ENCODE measurements at regions of chr16 and their contacts with region 1.

Region 1: DNA sequence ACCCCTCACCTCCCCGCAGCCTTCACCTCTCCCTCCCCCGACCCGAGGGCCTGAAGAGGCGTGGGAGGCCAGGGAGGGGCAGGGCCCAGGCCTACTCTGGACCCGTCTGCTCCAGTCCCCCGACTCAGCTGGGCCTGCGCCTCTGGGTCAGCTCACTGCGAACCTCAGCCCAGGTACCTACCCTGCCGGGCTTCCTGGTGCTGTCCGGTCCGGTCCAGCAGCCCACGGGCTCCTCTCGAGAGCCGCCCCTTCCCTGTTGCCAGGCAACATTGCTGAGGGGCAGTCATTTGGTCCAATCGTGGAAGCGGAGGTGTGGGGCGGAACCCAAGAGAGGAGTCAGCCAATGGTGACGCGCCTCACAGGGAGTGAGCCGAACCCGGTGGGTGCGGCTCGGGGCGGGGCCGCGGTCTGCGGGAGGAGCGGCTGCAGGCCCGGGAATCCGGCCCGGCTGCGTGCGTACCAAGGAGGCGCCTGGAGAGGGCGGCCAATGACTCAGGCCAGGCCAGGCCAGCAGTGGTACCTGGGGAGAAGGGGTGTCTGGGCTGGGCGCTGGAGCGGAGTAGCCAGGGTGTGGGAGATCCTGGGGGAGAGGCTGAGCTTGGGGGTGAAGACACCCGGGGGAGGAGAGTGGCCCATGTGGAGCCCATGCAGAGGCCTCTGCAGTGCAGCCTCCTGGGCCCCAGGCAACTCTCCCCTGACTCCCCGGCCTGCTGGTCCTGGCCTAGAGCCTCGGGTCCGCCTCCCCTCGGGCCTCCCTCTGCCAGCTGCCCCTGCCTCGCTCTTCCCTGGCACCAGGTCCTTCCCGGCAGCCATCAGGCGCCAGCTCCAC is at the start of gene MEAK7:
- DNase-seq: peak; percentile 95 to 98 (median 97)
- ATAC-seq: peak; percentile 94
- H3K4me3 ChIP-seq: peak within 1 kb of the TSS; percentile 74 to 83
- H3K4me3 Mint-ChIP-seq: peak within 1 kb of the TSS; percentile 90
- H3K27ac ChIP-seq: peak within 1 kb of the TSS; percentile 43
- H3K27ac Mint-ChIP-seq: peak within 1 kb of the TSS; percentile 84
- H3K4me1 ChIP-seq: peaks cover 56% of the 10 kb centered on the region
- H3K4me1 Mint-ChIP-seq: peaks cover 57% of the 10 kb centered on the region
- H3K27me3 ChIP-seq: peaks cover 0 to 2% of the 10 kb centered on the region in 2 experiments
- H3K27me3 Mint-ChIP-seq: no peaks in the 10 kb centered on the region
- CTCF ChIP-seq: no peak
- total RNA-seq, gene MEAK7: 2.1 to 2.2 TPM

Region 2: DNA sequence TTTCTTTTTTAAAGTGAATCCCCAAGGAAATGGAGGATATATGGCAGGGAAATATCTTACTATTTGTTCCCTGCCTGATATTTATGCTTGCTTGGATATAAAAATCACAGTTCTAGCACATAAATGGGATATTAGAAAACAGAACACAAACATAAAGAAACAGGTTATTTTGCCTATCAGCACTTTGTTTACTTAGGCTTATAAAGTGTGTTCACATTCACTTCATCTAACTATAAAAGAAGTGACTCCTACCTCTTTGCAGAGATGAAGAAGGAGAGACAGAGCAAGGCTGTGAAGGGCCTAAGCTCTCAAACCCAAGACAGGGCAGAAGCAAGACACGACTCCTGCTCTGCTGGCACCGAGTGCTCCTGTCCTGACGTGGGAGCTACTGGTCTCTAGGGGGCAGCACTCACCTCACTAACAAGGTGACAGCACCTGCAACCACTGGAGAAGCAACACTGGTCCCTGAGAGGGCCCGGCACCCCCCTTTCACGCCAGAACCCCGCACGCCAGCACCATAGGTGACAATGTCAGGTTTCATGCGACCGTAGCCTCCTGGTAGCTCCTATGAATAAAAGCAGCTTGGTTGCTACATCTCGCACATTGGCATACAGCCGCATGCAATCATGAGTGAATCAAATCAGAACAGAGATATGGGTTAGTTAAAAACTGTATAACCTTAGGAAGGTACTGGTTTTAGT is 419.9 kb before region 1 on chr16:
- CTCF ChIA-PET with region 1: no interaction called
- POLR2A ChIA-PET with region 1: no interaction called
- intact Hi-C with region 1: loop called in 1 of 2 experiments (anchors 5 kb)
- DNase-seq: peak; percentile 44 to 84 (median 71)
- ATAC-seq: peak; percentile 88
- H3K4me3 ChIP-seq: no peak overlapping the region
- H3K4me3 Mint-ChIP-seq: no peak overlapping the region
- H3K27ac ChIP-seq: no peak overlapping the region
- H3K27ac Mint-ChIP-seq: no peak overlapping the region
- H3K4me1 ChIP-seq: peaks cover 20% of the 10 kb centered on the region
- H3K4me1 Mint-ChIP-seq: peaks cover 32% of the 10 kb centered on the region
- H3K27me3 ChIP-seq: no peaks in the 10 kb centered on the region
- H3K27me3 Mint-ChIP-seq: no peaks in the 10 kb centered on the region
- CTCF ChIP-seq: peak; percentile 73

Region 3: DNA sequence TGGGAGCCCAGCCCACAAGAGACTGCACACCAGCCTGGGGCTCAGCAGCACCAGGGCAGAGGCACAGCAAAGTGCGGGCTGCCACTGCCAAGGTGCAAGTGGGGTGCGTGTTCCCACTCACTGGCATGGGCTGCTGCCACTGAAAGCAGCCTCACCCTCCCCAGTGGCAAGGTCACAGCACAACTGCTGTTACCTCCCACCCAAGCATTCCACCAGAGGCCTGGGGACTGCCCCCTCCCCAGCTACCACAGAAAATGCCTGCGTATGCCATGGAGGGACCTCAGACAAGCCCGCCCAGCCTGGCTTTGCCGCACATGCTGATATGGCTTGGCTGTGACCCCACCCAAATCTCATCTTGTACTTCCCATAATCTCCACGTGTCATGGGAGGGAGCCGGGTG is 33.3 kb before region 1 on chr16:
- CTCF ChIA-PET with region 1: no interaction called
- POLR2A ChIA-PET with region 1: no interaction called
- intact Hi-C with region 1: no loop called
- DNase-seq: peak in 1 of 9 experiments; percentile 15
- ATAC-seq: no peak
- H3K4me3 ChIP-seq: no peak overlapping the region
- H3K4me3 Mint-ChIP-seq: no peak overlapping the region
- H3K27ac ChIP-seq: no peak overlapping the region
- H3K27ac Mint-ChIP-seq: no peak overlapping the region
- H3K4me1 ChIP-seq: no peaks in the 10 kb centered on the region
- H3K4me1 Mint-ChIP-seq: peaks cover 2% of the 10 kb centered on the region
- H3K27me3 ChIP-seq: no peaks in the 10 kb centered on the region
- H3K27me3 Mint-ChIP-seq: no peaks in the 10 kb centered on the region
- CTCF ChIP-seq: no peak

Region 4: GRCh38 chr16:84484579-84485254 is 19.9 kb before region 1 on chr16:
- CTCF ChIA-PET with region 1: interaction called, 10 read pairs
- POLR2A ChIA-PET with region 1: no interaction called
- intact Hi-C with region 1: no loop called
- DNase-seq: peak in 1 of 9 experiments; percentile 51
- ATAC-seq: no peak
- H3K4me3 ChIP-seq: no peak overlapping the region
- H3K4me3 Mint-ChIP-seq: no peak overlapping the region
- H3K27ac ChIP-seq: no peak overlapping the region
- H3K27ac Mint-ChIP-seq: no peak overlapping the region
- H3K4me1 ChIP-seq: no peaks in the 10 kb centered on the region
- H3K4me1 Mint-ChIP-seq: no peaks in the 10 kb centered on the region
- H3K27me3 ChIP-seq: no peaks in the 10 kb centered on the region
- H3K27me3 Mint-ChIP-seq: no peaks in the 10 kb centered on the region
- CTCF ChIP-seq: no peak

Region 5: DNA sequence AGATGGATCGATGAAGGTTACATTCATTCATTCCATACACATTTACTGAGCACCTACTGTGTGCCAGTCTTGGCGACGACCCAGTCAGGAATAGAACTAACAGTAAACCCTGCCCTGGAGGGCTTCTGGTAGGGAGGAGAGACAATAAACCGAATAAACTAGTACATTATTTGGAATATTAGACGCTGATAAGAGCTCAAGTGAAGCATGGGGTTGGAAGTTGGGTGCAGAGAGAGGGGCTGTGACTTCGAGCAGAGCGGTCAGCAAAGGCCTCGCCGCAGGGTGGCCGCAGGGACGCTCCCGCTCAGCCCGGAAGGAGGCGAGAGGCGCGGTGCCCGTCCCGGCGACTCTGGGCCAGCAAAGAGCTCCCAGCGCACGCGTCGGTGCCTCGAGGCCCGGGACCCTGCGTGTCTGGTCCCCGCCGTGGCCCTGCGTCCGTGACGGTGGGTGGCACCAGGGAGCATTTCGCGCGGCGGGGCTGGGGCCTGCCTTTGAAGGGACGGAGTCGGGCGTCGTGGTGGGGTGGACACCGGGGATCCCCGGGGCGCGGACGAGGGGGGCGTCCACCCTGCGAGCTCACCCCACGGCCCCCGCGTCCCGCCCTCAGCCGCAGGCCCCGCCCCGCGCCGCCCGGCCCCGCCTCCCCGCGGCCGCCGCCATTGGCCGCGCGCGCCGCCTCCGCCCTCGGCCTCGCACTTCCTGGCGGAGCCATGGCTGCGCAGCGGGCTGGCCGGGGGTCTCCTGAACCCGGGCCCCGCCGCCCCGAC is 143.4 kb after region 1 on chr16 and contains the start of gene KLHL36:
- CTCF ChIA-PET with region 1: interaction called, 13 read pairs
- POLR2A ChIA-PET with region 1: no interaction called
- intact Hi-C with region 1: no loop called
- DNase-seq: peak; percentile 53 to 84 (median 71)
- ATAC-seq: peak; percentile 84
- H3K4me3 ChIP-seq: peak within 1 kb of the TSS; percentile 59 to 63
- H3K4me3 Mint-ChIP-seq: peak within 1 kb of the TSS; percentile 87
- H3K27ac ChIP-seq: peak within 1 kb of the TSS; percentile 44 to 68
- H3K27ac Mint-ChIP-seq: peak within 1 kb of the TSS; percentile 90
- H3K4me1 ChIP-seq: peaks cover 45% of the 10 kb centered on the region
- H3K4me1 Mint-ChIP-seq: peaks cover 44% of the 10 kb centered on the region
- H3K27me3 ChIP-seq: no peaks in the 10 kb centered on the region
- H3K27me3 Mint-ChIP-seq: no peaks in the 10 kb centered on the region
- CTCF ChIP-seq: no peak
- total RNA-seq, gene KLHL36: 50.8 to 56.5 TPM

Region 6: DNA sequence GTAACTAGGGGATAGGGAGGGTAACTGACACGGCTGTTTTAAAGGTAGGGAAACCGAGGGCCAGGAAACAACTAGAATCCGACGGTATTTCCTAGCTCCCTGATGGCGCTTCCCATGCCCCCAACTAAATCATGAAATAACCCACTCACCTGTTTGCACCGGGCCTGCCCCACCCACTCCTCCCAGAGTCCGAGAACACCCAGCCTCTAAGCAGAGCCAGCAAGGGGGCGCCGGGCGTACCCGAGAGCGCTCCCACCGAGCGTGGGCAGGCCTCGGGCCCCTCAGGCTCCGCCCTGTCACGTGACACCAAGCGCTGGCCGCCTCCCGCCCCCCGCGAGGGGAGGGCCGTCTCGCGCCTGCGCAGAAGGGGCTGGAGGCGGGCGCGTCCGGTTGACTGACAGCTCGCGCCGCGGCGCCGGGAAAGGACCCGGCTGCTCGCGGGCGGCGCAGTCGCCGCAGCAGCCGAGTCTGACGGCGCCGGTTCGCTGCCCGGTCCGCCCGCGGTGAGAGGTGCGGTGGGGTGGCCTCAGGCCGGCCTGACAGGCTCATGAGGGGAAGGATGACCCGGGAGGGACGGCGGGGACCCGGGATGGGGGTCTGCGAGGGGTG is 522.8 kb after region 1 on chr16 and contains the start of gene KIAA0513:
- CTCF ChIA-PET with region 1: no interaction called
- POLR2A ChIA-PET with region 1: no interaction called
- intact Hi-C with region 1: loop called in 1 of 2 experiments (anchors 2 kb)
- DNase-seq: peak; percentile 91 to 98 (median 97)
- ATAC-seq: peak; percentile 62
- H3K4me3 ChIP-seq: peak within 1 kb of the TSS; percentile 64 to 71
- H3K4me3 Mint-ChIP-seq: peak within 1 kb of the TSS; percentile 90
- H3K27ac ChIP-seq: peak within 1 kb of the TSS; percentile 62 to 73
- H3K27ac Mint-ChIP-seq: peak within 1 kb of the TSS; percentile 97
- H3K4me1 ChIP-seq: peaks cover 31% of the 10 kb centered on the region
- H3K4me1 Mint-ChIP-seq: peaks cover 43% of the 10 kb centered on the region
- H3K27me3 ChIP-seq: no peaks in the 10 kb centered on the region
- H3K27me3 Mint-ChIP-seq: no peaks in the 10 kb centered on the region
- CTCF ChIP-seq: no peak
- total RNA-seq, gene KIAA0513: 9.7 to 10.3 TPM